Right ventricle myocardium inferior (tissue), 1 donor: ENCODE measurements at regions of chr2 and their contacts with region 1.

Region 1: DNA sequence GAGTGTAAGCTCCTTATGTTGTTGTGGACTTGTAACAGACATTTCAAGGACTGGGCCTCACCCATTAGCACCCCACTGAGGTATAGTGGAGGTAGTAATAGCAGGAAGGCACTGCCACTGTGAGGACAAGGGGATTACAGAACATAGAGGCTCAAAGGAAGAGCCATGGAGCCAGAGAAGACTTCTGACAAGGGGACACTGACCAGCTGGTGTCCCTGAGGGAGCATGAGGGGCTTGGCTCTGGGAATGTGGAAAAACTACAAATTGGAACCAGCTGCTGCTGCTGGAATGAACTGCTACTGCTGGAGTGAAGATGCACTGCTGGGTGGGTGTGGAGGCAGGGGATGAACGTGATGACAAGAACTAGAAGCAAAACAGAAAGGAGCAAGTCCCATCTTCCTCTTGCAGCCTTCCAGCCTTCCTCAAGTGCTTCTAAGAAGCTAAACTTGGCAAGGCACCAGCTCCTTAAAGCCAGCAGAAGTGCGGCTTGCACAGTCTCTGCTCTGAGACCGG is 167.3 kb upstream of the NOSTRIN start:
- DNase-seq: peak; percentile 78
- ATAC-seq: peak; percentile 59

Region 2: GRCh38 chr2:168530982-168531622 is 104.0 kb before region 1 on chr2:
- intact Hi-C with region 1: loop called (anchors 5 kb)
- DNase-seq: no peak
- ATAC-seq: no peak

Region 3: GRCh38 chr2:168758970-168759820 is 124.1 kb after region 1 on chr2:
- intact Hi-C with region 1: loop called (anchors 10 kb)
- DNase-seq: no peak
- ATAC-seq: peak; percentile 58

Region 4: GRCh38 chr2:168819050-168819715 is 184.1 kb after region 1 on chr2:
- intact Hi-C with region 1: no loop called
- DNase-seq: no peak
- ATAC-seq: no peak